ENCODE measurements at regions of chr4 and their contacts with region 1.

Region 1: DNA sequence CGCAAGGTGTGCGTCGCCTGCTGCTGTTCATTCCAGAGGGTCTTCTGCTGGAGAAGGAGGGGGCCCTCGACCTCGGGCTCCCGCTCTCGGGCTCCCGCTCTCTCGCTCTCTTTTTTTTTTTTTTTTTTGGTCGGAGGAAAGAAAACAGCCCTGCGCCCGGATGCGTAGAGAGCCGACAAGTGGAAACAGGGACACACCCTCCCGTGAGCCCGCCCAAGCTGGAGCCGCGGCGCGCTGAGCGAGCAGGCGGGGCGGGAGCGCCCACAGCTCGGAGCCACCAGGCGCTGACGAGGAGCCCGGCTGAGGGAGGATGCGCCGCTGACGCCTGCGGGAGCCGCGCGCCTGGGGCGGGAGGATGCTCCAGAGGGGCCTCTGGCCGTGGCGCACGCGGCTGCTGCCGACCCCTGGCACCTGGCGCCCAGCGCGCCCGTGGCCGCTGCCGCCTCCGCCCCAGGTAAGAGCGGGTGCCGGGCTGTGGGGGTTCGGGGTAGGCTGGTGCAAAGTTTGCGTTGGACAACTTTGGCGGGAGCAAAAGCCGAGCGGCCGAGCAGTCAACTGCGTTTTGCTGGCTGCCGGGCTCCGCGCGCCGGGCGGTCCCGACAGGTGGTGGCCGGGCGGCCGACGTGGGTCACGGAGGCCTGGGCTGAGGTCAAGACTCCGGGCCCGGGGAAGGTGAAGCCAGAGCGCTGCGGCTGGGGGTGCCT is at the start of gene MCUB:
- DNase-seq: peak; percentile 95
- H3K4me3 Mint-ChIP-seq: peak within 1 kb of the TSS; percentile 84
- H3K27ac Mint-ChIP-seq: peak within 1 kb of the TSS; percentile 92
- H3K4me1 Mint-ChIP-seq: peaks cover 52% of the 10 kb centered on the region
- H3K27me3 Mint-ChIP-seq: no peaks in the 10 kb centered on the region
- total RNA-seq, gene MCUB: 76.7 to 80.5 TPM

Region 2: GRCh38 chr4:109588176-109588575 is 28.0 kb after region 1 on chr4:
- CTCF ChIA-PET with region 1: no interaction called
- POLR2A ChIA-PET with region 1: interaction called, 12 read pairs
- intact Hi-C with region 1: loop called (anchors 1 kb)
- DNase-seq: peak; percentile 81
- H3K4me3 Mint-ChIP-seq: no peak overlapping the region
- H3K27ac Mint-ChIP-seq: peak overlapping the region; percentile 58
- H3K4me1 Mint-ChIP-seq: peaks cover 64% of the 10 kb centered on the region
- H3K27me3 Mint-ChIP-seq: no peaks in the 10 kb centered on the region

Region 3: GRCh38 chr4:109702950-109703663 is 143.0 kb after region 1 on chr4 and contains the start of gene CASP6:
- CTCF ChIA-PET with region 1: interaction called, 4 read pairs
- POLR2A ChIA-PET with region 1: interaction called, 5 read pairs
- intact Hi-C with region 1: loop called (anchors 1 kb)
- DNase-seq: peak; percentile 79
- H3K4me3 Mint-ChIP-seq: peak within 1 kb of the TSS; percentile 90
- H3K27ac Mint-ChIP-seq: peak within 1 kb of the TSS; percentile 82
- H3K4me1 Mint-ChIP-seq: peaks cover 34% of the 10 kb centered on the region
- H3K27me3 Mint-ChIP-seq: no peaks in the 10 kb centered on the region
- total RNA-seq, gene CASP6: 18.4 to 29.9 TPM

Region 4: DNA sequence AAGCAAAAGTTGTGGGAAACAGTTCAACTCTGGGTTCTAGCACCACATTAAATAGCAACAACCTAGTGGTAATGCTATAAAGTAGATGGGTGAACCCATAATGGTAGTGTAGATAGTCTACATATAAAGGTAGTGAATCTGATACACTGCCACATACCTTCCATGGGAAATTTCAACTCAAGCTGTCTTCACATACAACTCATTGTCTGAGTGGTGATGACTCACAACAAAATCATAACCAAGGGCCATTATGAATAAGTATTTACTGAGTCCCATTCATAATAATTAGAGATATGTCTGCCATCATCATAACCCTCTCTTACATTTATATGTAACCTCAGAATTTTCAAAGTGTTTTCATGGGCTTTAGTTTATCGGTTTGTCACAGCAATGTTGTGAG is 387.3 kb after region 1 on chr4:
- CTCF ChIA-PET with region 1: no interaction called
- POLR2A ChIA-PET with region 1: no interaction called
- intact Hi-C with region 1: loop called (anchors 2 kb)
- DNase-seq: no peak
- H3K4me3 Mint-ChIP-seq: no peak overlapping the region
- H3K27ac Mint-ChIP-seq: peak overlapping the region; percentile 64
- H3K4me1 Mint-ChIP-seq: peaks cover 37% of the 10 kb centered on the region
- H3K27me3 Mint-ChIP-seq: peaks cover 4% of the 10 kb centered on the region